ENCODE measurements at regions of chr20 and their contacts with region 1.

Region 1: DNA sequence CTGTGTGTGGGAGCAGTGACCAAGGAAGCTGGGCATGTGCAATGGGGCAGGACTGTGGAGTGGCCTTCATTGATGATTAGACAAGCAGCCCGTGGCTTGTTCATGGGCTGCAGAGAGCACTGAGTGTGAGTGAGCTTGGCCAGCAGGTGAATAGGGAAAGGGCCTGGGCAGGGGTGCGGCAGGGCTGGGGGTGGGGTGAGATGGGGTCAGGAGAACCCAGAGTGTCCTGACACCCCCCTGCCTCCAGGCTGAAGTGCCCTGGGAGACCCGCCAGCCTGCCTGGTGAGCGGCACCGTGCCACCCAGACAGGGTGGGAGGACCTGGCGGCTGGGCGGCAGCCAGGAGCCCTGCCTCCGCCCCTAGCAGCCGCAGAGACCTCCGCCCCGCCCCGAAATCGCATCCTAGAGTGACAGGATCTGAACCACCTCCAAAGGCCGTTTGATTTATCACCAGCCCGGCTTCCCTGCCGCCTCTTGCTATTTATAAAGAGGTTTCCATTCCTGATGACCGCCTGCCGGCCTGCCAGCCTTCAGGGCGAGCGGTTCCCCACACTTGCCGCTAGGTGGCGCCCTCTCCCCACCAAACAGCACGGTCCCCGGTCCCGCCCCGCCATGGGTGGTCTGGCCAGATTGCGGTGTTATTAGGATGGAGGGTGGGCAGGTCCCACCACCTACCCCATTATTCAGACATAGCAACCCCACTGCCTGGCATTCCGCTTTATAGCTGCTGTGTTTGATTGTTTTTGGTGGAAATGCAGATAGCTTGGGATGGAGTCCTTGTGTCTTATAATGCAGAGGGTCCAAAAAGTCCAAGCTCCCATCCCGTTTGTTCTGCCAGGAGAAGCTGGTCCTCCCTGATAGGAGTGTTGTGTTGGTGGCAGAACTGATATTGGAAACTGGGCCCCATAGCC is 3.5 kb downstream of the MYLK2 start:
- DNase-seq: peak; percentile 62 to 78 (median 70)
- H3K4me3 ChIP-seq: no peak overlapping the region
- H3K4me3 Mint-ChIP-seq: peak overlapping the region in 3 of 7 donors; percentile 17 to 44 (median 32)
- H3K27ac ChIP-seq: no peak overlapping the region
- H3K27ac Mint-ChIP-seq: peak overlapping the region in 2 of 8 donors; percentile 8 to 55
- H3K4me1 ChIP-seq: no peaks in the 10 kb centered on the region
- H3K4me1 Mint-ChIP-seq: peaks cover 0 to 5% (median 5%) of the 10 kb centered on the region in 3 donors
- H3K27me3 ChIP-seq: no peaks in the 10 kb centered on the region
- H3K27me3 Mint-ChIP-seq: no peaks in the 10 kb centered on the region

Region 2: GRCh38 chr20:31845300-31845863 is 22.7 kb after region 1 on chr20 and contains the start of gene FOXS1:
- CTCF ChIA-PET with region 1: interaction called, 34 read pairs
- POLR2A ChIA-PET with region 1: no interaction called
- DNase-seq: no peak
- H3K4me3 ChIP-seq: no peak within 1 kb of the TSS
- H3K4me3 Mint-ChIP-seq: no peak within 1 kb of the TSS
- H3K27ac ChIP-seq: no peak within 1 kb of the TSS
- H3K27ac Mint-ChIP-seq: peak within 1 kb of the TSS in 1 of 8 donors; percentile 29
- H3K4me1 ChIP-seq: no peaks in the 10 kb centered on the region
- H3K4me1 Mint-ChIP-seq: no peaks in the 10 kb centered on the region
- H3K27me3 ChIP-seq: no peaks in the 10 kb centered on the region
- H3K27me3 Mint-ChIP-seq: peaks cover 7 to 18% of the 10 kb centered on the region in 2 donors
- total RNA-seq, gene FOXS1: not detected

Region 3: DNA sequence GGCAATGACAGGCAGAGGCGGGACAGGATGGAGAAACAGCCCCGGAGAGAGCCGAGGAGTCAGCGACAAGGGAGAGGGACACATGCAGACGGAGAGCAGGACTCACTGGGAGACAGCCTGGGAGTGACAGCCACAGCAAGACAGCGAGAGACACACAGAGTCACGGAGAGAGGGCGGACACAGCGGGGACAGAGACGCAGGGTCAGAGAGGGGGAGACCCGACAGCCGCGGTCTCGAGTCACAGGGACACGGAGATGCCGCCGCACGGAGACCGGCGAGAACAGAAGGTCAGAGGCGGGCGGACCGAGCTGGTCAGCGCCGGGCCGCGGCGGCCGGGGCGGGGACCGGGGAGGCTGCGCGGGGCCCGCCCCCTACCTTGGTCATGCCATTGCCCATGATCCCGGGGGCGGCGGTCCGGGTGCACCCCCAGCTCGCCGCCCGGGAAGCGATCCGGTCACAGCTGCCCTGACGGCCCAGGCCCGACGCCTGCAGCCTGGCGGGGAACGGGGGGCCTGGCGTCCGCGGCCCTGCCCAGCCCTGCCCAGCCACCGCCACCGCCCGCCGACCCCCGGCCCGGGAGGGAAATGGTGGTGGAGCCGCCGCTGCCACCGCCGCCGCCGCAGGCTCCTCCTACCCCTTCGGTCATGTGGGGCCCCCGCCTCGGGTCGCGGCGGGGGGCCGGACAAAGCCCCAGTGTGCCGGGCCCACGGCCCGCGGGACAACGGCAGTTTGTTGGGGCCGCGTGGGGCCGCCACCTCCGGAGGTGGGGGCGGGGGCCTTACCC is 47.5 kb after region 1 on chr20 and contains the starts of genes DUSP15 and TTLL9:
- CTCF ChIA-PET with region 1: no interaction called
- POLR2A ChIA-PET with region 1: no interaction called
- DNase-seq: peak in 1 of 5 donors; percentile 17
- H3K4me3 ChIP-seq: peak within 1 kb of the TSS; percentile 32
- H3K4me3 Mint-ChIP-seq: peak within 1 kb of the TSS; percentile 77 to 91 (median 88)
- H3K27ac ChIP-seq: no peak within 1 kb of the TSS
- H3K27ac Mint-ChIP-seq: peak within 1 kb of the TSS in 5 of 8 donors; percentile 16 to 82 (median 61)
- H3K4me1 ChIP-seq: peaks cover 11% of the 10 kb centered on the region
- H3K4me1 Mint-ChIP-seq: peaks cover 9 to 15% (median 14%) of the 10 kb centered on the region in 3 donors
- H3K27me3 ChIP-seq: peaks cover 24% of the 10 kb centered on the region
- H3K27me3 Mint-ChIP-seq: peaks cover 36 to 43% of the 10 kb centered on the region in 2 donors
- total RNA-seq, gene DUSP15: not detected
- total RNA-seq, gene TTLL9: not detected

Region 4: GRCh38 chr20:31894980-31895675 is 72.5 kb after region 1 on chr20:
- CTCF ChIA-PET with region 1: no interaction called
- POLR2A ChIA-PET with region 1: no interaction called
- DNase-seq: no peak
- H3K4me3 ChIP-seq: no peak overlapping the region
- H3K4me3 Mint-ChIP-seq: no peak overlapping the region
- H3K27ac ChIP-seq: no peak overlapping the region
- H3K27ac Mint-ChIP-seq: no peak overlapping the region
- H3K4me1 ChIP-seq: no peaks in the 10 kb centered on the region
- H3K4me1 Mint-ChIP-seq: peaks cover 0 to 4% (median 0%) of the 10 kb centered on the region in 3 donors
- H3K27me3 ChIP-seq: no peaks in the 10 kb centered on the region
- H3K27me3 Mint-ChIP-seq: peaks cover 17 to 19% of the 10 kb centered on the region in 2 donors

Region 5: GRCh38 chr20:32091888-32092346 is 269.2 kb after region 1 on chr20:
- CTCF ChIA-PET with region 1: interaction called, 13 read pairs
- POLR2A ChIA-PET with region 1: no interaction called
- DNase-seq: peak; percentile 54 to 80 (median 60)
- H3K4me3 ChIP-seq: no peak overlapping the region
- H3K4me3 Mint-ChIP-seq: no peak overlapping the region
- H3K27ac ChIP-seq: no peak overlapping the region
- H3K27ac Mint-ChIP-seq: peak overlapping the region in 1 of 8 donors; percentile 29
- H3K4me1 ChIP-seq: no peaks in the 10 kb centered on the region
- H3K4me1 Mint-ChIP-seq: peaks cover 0 to 2% (median 0%) of the 10 kb centered on the region in 3 donors
- H3K27me3 ChIP-seq: no peaks in the 10 kb centered on the region
- H3K27me3 Mint-ChIP-seq: peaks cover 8 to 12% of the 10 kb centered on the region in 2 donors